PC-9 (cell line): ENCODE measurements at regions of chr11 and their contacts with region 1.

Region 1: DNA sequence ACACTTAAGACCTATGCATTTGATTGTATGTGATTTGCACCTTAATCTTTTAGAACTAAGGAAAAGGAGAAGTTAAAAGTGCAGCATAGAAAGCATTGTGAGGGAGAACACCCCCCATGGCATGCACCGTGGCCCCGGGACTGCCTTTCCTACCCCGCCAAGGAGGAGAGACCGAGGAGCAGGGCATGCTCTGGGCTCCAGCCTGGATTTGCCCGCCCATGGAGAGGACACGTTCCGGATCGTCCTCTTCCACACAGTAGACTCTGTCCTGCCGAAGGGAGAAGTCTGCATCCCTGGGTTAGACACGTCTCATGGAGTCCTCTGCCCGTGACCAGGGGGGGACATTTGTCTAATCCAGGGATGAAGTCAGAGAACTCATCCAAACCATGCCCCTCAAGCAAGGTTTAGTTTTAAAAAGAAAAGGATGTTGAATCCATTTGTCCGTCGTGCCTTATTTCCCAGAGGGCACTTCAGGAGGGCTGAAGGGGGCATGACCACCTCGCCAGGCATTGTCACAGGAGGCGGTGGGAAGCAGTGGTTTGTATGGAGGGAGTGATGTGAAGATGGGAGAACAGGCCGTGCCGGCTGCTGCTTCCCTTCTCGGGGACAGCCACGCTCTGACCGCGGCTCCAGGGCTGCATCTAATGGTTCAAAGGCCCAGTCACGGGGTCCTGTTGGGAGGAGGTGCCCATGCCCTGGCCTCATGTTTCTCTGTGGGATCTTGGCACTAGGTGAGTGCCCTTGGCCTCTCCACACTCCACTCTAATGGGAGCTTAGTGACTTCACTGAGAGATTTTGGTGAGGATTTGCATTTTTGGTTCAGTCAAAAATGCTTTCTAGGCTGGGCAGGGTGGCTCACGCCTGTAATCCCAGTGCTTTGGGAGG is 66.2 kb upstream of the GAL start:
- DNase-seq: no peak
- H3K4me3 ChIP-seq: no peak overlapping the region
- H3K27ac ChIP-seq: no peak overlapping the region
- H3K4me1 ChIP-seq: no peaks in the 10 kb centered on the region
- H3K27me3 ChIP-seq: peaks cover 14% of the 10 kb centered on the region; the same call in 1 of the 2 replicates
- CTCF ChIP-seq: no peak

Region 2: DNA sequence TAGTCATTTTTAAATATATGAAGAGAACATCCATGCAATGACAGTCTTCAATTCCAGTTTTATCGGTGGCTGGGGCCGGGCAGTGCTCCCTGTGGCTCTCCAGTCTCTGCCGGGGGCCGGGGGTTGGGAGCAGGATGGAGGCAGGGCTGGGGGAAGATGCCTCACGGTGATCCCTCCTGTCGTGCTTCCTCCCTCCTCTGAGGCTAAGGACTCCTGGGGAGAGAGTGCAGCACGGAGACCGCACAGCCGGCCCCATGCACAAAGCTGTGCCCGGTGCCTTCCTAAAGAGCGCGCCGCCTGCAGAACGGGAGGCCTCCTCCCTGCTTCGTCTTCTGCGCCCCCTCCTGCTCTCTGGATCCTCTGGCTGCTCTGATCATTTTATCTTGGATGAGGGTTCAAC is 86.7 kb after region 1 on chr11:
- CTCF ChIA-PET with region 1: no interaction called
- POLR2A ChIA-PET with region 1: no interaction called
- intact Hi-C with region 1: no loop called
- DNase-seq: no peak
- H3K4me3 ChIP-seq: no peak overlapping the region
- H3K27ac ChIP-seq: no peak overlapping the region
- H3K4me1 ChIP-seq: no peaks in the 10 kb centered on the region
- H3K27me3 ChIP-seq: peaks cover 63% of the 10 kb centered on the region
- CTCF ChIP-seq: no peak

Region 3: GRCh38 chr11:68816917-68817419 is 198.8 kb after region 1 on chr11:
- CTCF ChIA-PET with region 1: interaction called, 20 read pairs
- POLR2A ChIA-PET with region 1: no interaction called
- intact Hi-C with region 1: no loop called
- DNase-seq: no peak
- H3K4me3 ChIP-seq: no peak overlapping the region
- H3K27ac ChIP-seq: no peak overlapping the region
- H3K4me1 ChIP-seq: no peaks in the 10 kb centered on the region
- H3K27me3 ChIP-seq: no peaks in the 10 kb centered on the region
- CTCF ChIP-seq: no peak